ENCODE measurements at regions of chr5 and their contacts with region 1.

Region 1: GRCh38 chr5:142931896-142932686 is 161.9 kb downstream of the ARHGAP26 start:
- DNase-seq: no peak
- H3K4me3 ChIP-seq: no peak overlapping the region
- H3K27ac ChIP-seq: no peak overlapping the region
- H3K4me1 ChIP-seq: no peaks in the 10 kb centered on the region
- H3K27me3 ChIP-seq: no peaks in the 10 kb centered on the region
- CTCF ChIP-seq: no peak

Region 2: DNA sequence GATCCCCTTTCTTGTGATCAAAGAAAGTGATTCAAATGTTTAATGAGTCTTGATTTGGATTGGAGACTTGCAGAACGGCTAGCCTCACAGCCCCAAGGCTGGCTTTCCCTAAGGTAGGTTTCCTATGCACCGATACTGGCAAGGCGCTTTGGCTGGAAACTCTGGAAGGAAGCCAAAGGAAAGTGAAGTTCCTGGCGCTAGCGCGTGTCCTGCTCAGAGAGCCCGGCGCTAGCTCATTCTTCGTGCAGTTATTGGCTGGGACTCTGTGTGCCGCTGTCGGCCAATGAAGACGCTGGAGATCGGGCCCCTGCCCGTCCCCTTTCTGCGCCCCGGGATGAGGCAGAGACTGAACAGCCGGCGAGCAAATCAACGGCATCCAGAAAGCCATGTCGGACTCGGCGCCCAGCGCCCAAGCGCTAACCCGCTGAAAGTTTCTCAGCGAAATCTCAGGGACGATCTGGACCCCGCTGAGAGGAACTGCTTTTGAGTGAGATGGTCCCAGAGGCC is 1456.4 kb before region 1 on chr5 and contains the start of gene PCDHGC3:
- CTCF ChIA-PET with region 1: no interaction called
- dilution Hi-C with region 1: no loop called
- in situ Hi-C with region 1: no loop called
- intact Hi-C with region 1: no loop called
- DNase-seq: peak; percentile 95
- H3K4me3 ChIP-seq: peak within 1 kb of the TSS; percentile 50 to 73 (median 72)
- H3K27ac ChIP-seq: peak within 1 kb of the TSS; percentile 79
- H3K4me1 ChIP-seq: peaks cover 25% of the 10 kb centered on the region
- H3K27me3 ChIP-seq: no peaks in the 10 kb centered on the region
- CTCF ChIP-seq: peak; percentile 14 to 46
- total RNA-seq, gene PCDHGC3: 74.7 to 76.3 TPM

Region 3: DNA sequence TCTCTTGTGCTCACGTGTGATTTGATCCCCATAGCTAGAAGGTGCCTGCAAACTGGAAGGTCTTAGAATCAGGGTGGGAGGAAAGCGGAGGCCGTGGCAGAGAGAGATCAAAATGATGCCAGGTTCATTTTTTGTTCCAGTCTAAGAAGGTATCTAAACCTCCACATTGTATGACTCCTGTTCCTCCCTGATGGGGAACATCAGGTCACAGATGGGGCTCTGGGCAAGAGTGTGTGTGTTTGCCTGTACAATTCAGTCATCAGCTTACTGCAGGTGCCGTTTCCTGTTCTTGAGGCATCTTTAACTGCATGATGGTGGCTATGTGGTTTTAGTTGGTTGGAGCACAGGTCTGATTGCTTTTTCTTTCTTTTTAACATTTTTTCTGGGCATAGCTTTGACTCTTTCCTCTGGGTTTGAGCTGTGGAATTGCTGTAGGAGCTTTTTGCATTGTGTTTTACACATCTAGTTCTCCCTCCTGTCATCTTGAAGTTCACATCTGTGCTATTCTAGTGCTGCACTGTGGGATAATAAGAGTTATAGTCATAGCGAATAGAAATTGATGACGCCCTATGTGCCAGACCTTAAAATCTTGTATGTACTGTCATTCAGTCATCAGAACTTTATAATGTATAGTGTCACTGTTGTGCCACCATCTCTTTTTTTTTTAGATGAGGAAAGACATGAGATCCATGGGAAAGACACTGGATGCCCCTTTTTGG is 131.2 kb before region 1 on chr5:
- CTCF ChIA-PET with region 1: no interaction called
- dilution Hi-C with region 1: no loop called
- in situ Hi-C with region 1: no loop called
- intact Hi-C with region 1: no loop called
- DNase-seq: no peak
- H3K4me3 ChIP-seq: no peak overlapping the region
- H3K27ac ChIP-seq: no peak overlapping the region
- H3K4me1 ChIP-seq: no peaks in the 10 kb centered on the region
- H3K27me3 ChIP-seq: no peaks in the 10 kb centered on the region
- CTCF ChIP-seq: no peak

Region 4: DNA sequence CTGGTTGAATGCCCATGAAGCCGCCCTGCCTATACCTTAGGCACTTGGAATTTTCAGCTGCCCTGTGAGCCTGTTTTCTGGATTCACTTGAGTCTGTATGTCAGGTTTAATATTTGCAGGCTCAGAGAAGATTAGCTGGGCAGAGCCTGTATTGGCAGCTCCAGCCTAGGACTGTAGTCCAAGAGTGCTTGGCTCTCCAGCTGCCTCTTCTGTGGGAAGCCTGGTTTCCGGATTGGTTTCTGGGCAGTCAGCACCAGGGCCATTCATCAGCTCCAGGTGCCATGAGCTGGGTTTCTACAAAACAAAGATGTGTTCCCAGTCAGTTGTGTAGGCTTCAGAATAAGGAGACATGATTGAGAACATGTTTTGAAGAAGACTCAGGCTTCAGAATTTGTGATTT is 71.8 kb before region 1 on chr5:
- CTCF ChIA-PET with region 1: no interaction called
- dilution Hi-C with region 1: no loop called
- in situ Hi-C with region 1: no loop called
- intact Hi-C with region 1: no loop called
- DNase-seq: no peak
- H3K4me3 ChIP-seq: no peak overlapping the region
- H3K27ac ChIP-seq: no peak overlapping the region
- H3K4me1 ChIP-seq: peaks cover 4% of the 10 kb centered on the region
- H3K27me3 ChIP-seq: no peaks in the 10 kb centered on the region
- CTCF ChIP-seq: no peak

Region 5: DNA sequence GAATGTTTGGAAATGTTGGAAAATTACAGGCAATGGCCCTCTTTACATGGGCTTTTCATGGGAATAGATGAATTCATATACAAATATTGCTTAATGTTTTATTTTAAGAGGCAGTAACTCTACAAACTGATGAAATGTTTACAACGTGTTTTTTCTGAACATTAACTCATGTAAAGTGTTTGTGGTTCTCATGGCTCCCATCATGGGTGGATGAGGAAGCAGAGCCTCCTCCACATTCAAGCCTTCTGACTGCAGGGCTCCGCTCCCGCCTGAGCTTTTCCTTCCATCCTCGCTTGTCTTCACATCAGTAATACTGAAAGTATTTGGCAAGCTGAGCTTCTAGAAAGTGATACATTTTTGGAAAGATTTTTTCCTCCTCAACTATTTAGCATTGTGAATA is 42.3 kb after region 1 on chr5:
- CTCF ChIA-PET with region 1: no interaction called
- dilution Hi-C with region 1: loop called (anchors 5 kb)
- in situ Hi-C with region 1: no loop called
- intact Hi-C with region 1: no loop called
- DNase-seq: no peak
- H3K4me3 ChIP-seq: no peak overlapping the region
- H3K27ac ChIP-seq: no peak overlapping the region
- H3K4me1 ChIP-seq: peaks cover 23% of the 10 kb centered on the region
- H3K27me3 ChIP-seq: no peaks in the 10 kb centered on the region
- CTCF ChIP-seq: no peak